ENCODE measurements at regions of chr11 and their contacts with region 1.

Region 1: DNA sequence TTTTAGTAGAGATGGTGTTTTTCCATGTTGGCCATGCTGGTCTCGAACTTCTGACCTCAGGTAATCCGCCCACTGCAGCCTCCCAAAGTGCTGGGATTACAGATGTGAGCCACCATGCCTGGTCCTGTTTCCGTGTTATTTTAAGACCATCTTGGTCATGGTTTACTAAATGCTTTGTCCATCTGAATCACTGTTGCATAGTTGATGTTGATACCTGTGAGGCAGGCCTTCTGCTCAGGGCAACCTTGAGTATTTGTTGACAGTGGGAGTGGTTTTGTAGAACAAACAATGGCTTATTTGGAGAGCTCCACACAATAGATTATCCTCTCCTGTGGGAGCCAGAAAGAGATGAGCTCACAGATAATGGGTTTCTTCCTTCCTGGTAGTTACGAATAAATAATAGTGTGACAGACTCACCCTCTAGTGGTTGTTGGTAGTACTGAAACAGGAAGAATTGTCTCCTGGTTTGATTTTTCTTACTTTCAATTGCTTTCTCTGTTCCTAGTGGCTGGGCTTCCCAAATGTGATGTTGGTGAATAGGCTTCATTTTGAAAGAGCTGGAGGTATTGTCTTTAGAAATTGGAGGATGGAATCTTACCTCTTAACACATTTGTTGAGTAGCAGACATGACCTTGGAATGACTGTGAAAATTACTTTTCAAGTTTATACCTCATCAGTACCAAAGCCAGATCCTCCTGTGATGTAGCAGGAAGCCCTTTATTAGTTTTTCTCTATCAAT is 39.0 kb downstream of the CTNND1 start:
- DNase-seq: peak; percentile 47
- H3K4me3 ChIP-seq: no peak overlapping the region
- H3K27ac ChIP-seq: no peak overlapping the region
- H3K27me3 ChIP-seq: no peaks in the 10 kb centered on the region
- CTCF ChIP-seq: peak; percentile 66

Region 2: DNA sequence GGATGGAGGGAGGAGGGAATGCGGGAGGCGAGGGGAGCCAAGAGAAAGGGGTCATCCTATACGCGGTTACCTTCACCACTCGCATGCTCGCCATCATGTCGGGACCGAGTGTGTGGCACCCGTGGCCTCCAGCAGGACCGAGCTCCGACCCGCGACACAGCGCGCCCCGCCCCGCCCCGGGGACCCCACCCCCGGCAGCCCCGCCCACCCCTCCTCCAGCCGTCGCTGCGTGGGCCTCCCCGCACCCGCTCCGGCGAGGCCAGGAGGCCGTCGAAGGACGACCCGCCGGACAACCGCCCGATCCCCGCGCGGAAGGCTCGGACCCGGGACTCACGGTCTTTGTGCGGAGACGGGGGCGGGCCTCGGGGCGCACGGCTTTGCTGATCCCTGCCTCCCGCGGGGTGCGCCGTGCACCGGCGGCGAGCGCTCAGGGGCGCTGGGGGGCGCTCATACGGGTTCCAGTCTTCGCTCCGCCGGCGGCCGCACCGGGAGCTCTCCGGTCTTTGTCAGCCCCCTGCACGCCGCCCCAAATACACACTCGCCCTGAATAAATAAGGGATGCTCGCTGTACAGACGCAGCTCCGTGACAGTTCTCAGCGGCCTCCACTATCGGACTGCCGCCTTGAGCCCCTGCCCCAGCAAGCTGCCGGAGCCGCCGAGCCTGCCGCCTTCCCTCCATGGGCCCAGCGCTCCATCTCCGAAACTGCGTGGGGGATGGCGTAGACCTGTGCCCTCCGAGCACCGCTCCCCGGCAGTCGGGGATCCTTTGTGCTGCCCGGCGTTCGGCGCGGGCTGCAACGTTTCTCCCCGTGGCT is 232.9 kb before region 1 on chr11 and contains the start of gene UBE2L6:
- in situ Hi-C with region 1: no loop called
- DNase-seq: no peak
- H3K4me3 ChIP-seq: peak within 1 kb of the TSS; percentile 83
- H3K27ac ChIP-seq: no peak within 1 kb of the TSS
- H3K27me3 ChIP-seq: no peaks in the 10 kb centered on the region
- CTCF ChIP-seq: no peak

Region 3: GRCh38 chr11:57842873-57843272 is 42.3 kb after region 1 on chr11:
- in situ Hi-C with region 1: no loop called
- DNase-seq: no peak
- H3K4me3 ChIP-seq: no peak overlapping the region
- H3K27ac ChIP-seq: no peak overlapping the region
- H3K27me3 ChIP-seq: no peaks in the 10 kb centered on the region
- CTCF ChIP-seq: no peak

Region 4: DNA sequence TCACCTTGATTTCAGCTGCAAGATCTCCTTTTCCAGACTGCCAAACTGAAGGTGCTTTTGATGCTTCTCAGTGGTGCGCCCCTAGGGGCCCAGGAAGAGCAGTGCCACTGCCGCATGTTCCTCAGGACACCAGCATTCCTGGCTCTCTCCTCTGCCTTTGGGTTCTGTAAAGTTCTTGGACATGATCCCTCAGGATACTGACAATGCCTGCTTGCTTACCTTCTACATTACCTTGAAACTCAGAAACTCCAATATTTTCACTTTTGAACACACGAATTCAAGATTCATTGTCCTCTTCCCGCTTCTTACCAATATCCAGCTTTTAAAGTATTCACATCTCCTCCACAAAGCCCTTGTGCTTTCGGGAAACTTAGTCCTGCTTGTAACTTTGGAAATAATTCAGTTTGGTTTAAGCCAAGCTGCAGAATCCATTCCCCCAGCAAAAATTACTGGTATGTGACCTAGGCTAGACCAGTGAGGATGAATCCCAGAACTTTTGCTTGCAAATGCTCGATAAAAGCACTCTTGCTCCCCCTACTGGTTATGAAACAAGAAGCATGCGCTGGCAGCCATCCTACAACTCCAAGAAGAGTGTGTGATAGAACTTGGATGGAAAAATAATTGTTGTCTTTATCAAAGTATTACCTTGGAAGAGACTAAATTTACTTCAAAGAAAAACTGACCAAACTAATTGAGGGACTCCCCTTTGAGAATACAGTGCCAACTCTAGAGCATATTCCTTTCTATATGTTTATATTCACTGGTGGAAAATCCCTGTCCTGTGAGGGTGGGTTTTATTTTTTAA is 723.8 kb after region 1 on chr11:
- in situ Hi-C with region 1: loop called (anchors 25 kb)
- DNase-seq: peak; percentile 75
- H3K4me3 ChIP-seq: peak overlapping the region; percentile 3
- H3K27ac ChIP-seq: no peak overlapping the region
- H3K27me3 ChIP-seq: no peaks in the 10 kb centered on the region
- CTCF ChIP-seq: peak; percentile 96